IMR-90 (cell line): ENCODE measurements at regions of chr11 and their contacts with region 1.

Region 1: DNA sequence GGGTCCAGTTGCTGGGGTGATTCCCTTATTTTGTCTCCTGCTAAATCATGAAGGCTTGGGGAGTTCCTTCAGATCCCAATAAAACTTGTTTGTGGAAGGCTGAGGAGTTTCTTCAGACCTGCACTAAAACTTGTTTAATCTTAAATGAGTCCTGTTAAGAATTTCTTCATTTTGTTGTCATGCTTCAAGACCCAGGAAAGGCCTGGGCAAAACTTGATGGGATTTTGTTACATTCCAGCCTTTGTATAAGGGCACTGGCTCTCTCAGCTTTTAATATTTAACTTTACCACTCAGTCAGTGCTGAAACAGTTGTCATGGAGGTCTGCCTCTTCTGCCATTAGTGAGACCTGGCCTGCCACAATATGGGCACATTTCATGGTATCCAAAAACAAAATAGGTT is 699.0 kb downstream of the ETS1 start:
- DNase-seq: no peak
- ATAC-seq: no peak
- H3K4me3 ChIP-seq: no peak overlapping the region
- H3K27ac ChIP-seq: no peak overlapping the region
- H3K4me1 ChIP-seq: peaks cover 4% of the 10 kb centered on the region; the same call in 1 of the 2 replicates
- H3K27me3 ChIP-seq: no peaks in the 10 kb centered on the region
- CTCF ChIP-seq: no peak
- POLR2A ChIP-seq: no peak
- RAD21 ChIP-seq: no peak

Region 2: DNA sequence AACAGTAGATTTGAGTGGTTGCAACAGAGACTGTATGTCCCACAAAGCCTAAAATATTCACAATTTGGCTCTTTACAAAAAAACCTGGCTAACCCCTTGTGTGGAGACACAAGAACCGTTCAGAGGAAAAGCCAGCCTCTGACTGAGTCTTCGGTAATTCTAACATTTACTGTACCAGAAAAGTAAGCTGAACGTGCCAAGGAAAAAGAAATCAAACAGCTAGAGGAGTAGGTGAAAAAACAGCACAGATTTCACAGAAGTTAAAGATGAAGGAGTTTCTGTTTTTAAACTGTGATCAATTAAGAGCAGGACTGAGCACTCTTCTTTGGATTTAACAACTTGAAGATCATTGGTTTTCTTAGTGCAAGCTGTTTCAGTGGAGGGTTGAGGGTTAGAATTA is 463.1 kb before region 1 on chr11:
- CTCF ChIA-PET with region 1: interaction called, 10 read pairs
- POLR2A ChIA-PET with region 1: no interaction called
- dilution Hi-C with region 1: no loop called
- in situ Hi-C with region 1: no loop called
- intact Hi-C with region 1: no loop called
- DNase-seq: no peak
- ATAC-seq: no peak
- H3K4me3 ChIP-seq: no peak overlapping the region
- H3K27ac ChIP-seq: no peak overlapping the region
- H3K4me1 ChIP-seq: no peaks in the 10 kb centered on the region
- H3K27me3 ChIP-seq: no peaks in the 10 kb centered on the region
- CTCF ChIP-seq: no peak
- POLR2A ChIP-seq: no peak
- RAD21 ChIP-seq: no peak